Activated T-helper 1 cell treated with anti-CD3 and anti-CD28 coated beads, Interleukin-12 subunit alpha, Interleukin-12 subunit beta, Interleukin-2, Interleukin-4 antibody, amounts not matched to agents 30 ng/mL and 10 ng/mL and 1 ng/mL, durations not matched to agents 14 hours and 24 hours and 36 hours (primary cell): ENCODE measurements at regions of chr21 and their contacts with region 1.

Region 1: GRCh38 chr21:45554477-45555175 is 12.4 kb upstream of the SLC19A1 start:
- DNase-seq: peak; percentile 88
- H3K4me3 Mint-ChIP-seq: peak overlapping the region; percentile 91
- H3K27ac Mint-ChIP-seq: peak overlapping the region; percentile 93
- H3K4me1 Mint-ChIP-seq: peaks cover 22% of the 10 kb centered on the region
- H3K27me3 Mint-ChIP-seq: peaks cover 3% of the 10 kb centered on the region

Region 2: GRCh38 chr21:45478115-45478801 is 76.4 kb before region 1 on chr21:
- intact Hi-C with region 1: loop called (anchors 1 kb)
- DNase-seq: peak; percentile 68
- H3K4me3 Mint-ChIP-seq: peak overlapping the region; percentile 92
- H3K27ac Mint-ChIP-seq: peak overlapping the region; percentile 99
- H3K4me1 Mint-ChIP-seq: peaks cover 32% of the 10 kb centered on the region
- H3K27me3 Mint-ChIP-seq: no peaks in the 10 kb centered on the region

Region 3: GRCh38 chr21:45542242-45542666 is 12.4 kb before region 1 on chr21 and contains the start of gene SLC19A1:
- intact Hi-C with region 1: loop called (anchors 1 kb)
- DNase-seq: peak; percentile 78
- H3K4me3 Mint-ChIP-seq: peak within 1 kb of the TSS; percentile 89
- H3K27ac Mint-ChIP-seq: peak within 1 kb of the TSS; percentile 68
- H3K4me1 Mint-ChIP-seq: peaks cover 14% of the 10 kb centered on the region
- H3K27me3 Mint-ChIP-seq: no peaks in the 10 kb centered on the region
- total RNA-seq, gene SLC19A1: 104 and 105 TPM in 2 replicates

Region 4: DNA sequence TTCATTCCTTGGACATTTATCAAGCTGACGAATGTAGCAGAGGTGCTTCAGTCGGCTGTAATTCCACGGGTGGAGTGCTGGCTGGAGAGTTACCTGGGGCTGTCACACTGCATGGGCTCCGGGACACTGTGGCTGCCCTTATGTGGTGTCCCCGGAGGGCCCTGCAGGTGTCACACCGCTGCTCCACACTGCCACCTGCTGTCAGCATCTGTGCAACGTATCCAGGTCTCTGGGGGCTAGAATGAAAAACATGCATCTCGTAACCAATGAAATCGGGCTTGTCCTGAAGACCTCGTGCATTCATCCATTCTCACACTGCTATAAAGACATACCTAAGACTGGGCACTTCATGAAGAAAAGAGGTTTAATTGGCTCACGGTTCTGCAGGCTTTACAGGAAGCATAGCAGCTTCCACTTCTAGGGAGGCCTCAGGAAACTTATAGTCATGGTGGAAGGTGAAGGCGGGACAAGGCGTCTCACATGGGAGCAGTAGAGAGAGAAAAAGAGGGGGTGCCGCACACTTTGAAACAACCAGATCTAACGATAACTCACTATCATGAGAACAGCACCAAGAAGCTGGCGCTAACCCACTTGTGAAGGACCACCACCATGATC is 42.2 kb after region 1 on chr21:
- intact Hi-C with region 1: loop called (anchors 1 kb)
- DNase-seq: peak; percentile 73
- H3K4me3 Mint-ChIP-seq: no peak overlapping the region
- H3K27ac Mint-ChIP-seq: peak overlapping the region; percentile 4
- H3K4me1 Mint-ChIP-seq: peaks cover 9% of the 10 kb centered on the region
- H3K27me3 Mint-ChIP-seq: peaks cover 2% of the 10 kb centered on the region

Region 5: DNA sequence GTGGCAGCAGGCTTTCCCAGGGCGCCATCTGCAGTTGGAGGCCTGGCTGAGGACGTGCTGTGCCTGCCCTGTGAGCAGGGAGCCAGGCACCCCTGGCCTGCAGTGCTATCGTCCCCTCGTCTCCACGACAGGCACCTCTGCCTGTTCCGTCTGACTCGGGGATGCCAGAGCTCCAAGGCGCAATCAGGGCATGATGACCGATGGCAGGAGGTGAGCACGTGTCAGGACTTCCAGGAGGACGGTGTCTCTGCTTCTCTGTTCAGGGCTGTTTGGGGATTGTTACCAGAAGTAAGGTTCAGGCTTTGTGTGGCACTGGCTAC is 214.1 kb after region 1 on chr21:
- intact Hi-C with region 1: loop called (anchors 1 kb)
- DNase-seq: no peak
- H3K4me3 Mint-ChIP-seq: peak overlapping the region; percentile 25
- H3K27ac Mint-ChIP-seq: peak overlapping the region; percentile 95
- H3K4me1 Mint-ChIP-seq: peaks cover 36% of the 10 kb centered on the region
- H3K27me3 Mint-ChIP-seq: no peaks in the 10 kb centered on the region